Panc1 (cell line): ENCODE measurements at regions of chr1 and their contacts with region 1.

Region 1: GRCh38 chr1:54715493-54716298 is at the start of gene TTC4:
- DNase-seq: peak; percentile 28
- ATAC-seq: peak; percentile 99
- H3K4me3 ChIP-seq: peak within 1 kb of the TSS; percentile 86 to 93
- H3K27ac ChIP-seq: peak within 1 kb of the TSS; percentile 87
- H3K4me1 ChIP-seq: peaks cover 11% of the 10 kb centered on the region; the same call in 1 of the 2 replicates
- H3K27me3 ChIP-seq: no peaks in the 10 kb centered on the region
- CTCF ChIP-seq: no peak
- total RNA-seq, gene TTC4: 25.2 TPM

Region 2: DNA sequence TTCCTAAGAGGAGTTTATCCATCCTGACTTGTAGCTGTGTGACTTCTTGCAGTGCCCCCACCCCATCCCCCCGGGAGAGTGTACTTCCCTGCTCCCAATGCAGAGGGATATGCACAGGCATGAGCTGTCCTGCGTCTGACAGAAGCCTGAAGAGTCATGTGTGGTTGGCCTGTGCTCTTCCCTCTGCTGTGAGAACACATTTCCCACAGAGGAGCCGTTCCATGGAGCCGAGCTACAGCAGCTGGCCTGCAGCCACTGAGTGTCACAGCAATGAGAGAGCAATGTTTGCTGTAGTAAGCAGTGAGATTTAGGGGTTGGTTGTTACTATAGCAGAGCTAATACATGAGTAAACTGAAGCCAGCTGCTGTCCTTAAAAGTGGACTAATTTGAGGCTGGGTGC is 26.6 kb after region 1 on chr1:
- CTCF ChIA-PET with region 1: no interaction called
- POLR2A ChIA-PET with region 1: interaction called, 13 read pairs
- in situ Hi-C with region 1: no loop called
- intact Hi-C with region 1: no loop called
- DNase-seq: no peak
- ATAC-seq: no peak
- H3K4me3 ChIP-seq: no peak overlapping the region
- H3K27ac ChIP-seq: no peak overlapping the region
- H3K4me1 ChIP-seq: no peaks in the 10 kb centered on the region
- H3K27me3 ChIP-seq: no peaks in the 10 kb centered on the region
- CTCF ChIP-seq: no peak